Activated CD8-positive, alpha-beta T cell treated with anti-CD3 and anti-CD28 coated beads, Interleukin-2, amount 10 ng/mL, durations not matched to agents 7 days and 5 days (primary cell): ENCODE measurements at regions of chr4 and their contacts with region 1.

Region 1: DNA sequence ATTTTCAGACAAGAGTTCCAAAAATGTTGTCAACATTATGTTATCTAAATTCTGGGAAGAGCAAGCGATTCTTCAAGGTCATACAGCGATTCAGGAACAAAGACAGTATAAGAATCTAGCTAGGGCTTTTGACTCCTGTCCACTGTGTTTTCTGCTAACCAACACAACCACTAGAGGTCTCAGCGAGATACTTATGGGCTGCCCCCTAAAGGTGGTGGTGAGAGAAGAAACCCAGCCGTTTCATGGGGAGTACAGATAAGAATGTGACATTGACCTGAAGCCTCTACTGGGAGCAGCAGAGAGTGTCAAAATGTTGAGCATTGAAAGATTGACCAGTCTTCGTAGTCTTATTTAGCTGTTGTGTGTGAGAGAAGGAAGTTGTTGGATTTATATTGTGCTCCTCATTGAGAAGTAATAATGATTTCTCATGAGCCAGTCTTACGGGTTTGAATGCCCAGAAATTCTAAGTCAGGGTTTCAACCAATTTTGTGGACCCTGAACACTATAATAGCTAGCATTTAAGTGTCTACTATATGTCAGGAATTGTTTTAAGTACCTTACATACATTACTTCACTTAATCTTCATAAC is 168.3 kb downstream of the SPRY1 start:
- DNase-seq: peak; percentile 83
- ATAC-seq: peak; percentile 100
- H3K4me3 Mint-ChIP-seq: no peak overlapping the region
- H3K27ac Mint-ChIP-seq: no peak overlapping the region
- H3K4me1 Mint-ChIP-seq: peaks cover 19% of the 10 kb centered on the region
- H3K27me3 Mint-ChIP-seq: peaks cover 2% of the 10 kb centered on the region

Region 2: DNA sequence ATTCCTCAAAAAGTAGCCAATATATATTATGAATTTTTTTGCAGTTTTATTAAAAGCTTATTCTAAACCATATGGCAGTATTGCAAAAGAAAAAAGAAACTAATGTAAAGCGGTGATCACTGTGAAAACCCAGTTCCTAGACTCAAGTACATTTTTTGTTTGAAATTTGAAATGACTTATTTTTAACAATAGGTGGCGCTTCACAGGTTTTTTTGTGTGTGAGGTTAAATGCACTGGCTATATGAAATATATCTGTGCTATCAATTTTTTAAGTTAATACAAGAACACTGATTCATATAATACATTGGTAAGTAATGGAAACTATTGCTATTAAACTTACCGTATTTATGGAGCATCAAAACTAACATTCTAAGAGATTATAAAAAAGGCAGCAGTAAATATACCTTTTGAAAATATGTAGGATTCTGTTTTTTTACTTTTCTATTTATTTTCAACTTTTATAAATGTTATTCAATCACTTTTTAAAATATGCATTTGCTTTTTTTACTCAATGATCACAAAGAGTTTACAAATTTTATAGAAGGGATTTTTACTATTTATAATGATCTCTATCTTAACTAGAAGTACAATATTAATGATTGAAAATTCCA is 173.9 kb before region 1 on chr4:
- CTCF ChIA-PET with region 1: interaction called, 28 read pairs
- POLR2A ChIA-PET with region 1: no interaction called
- DNase-seq: no peak
- ATAC-seq: no peak
- H3K4me3 Mint-ChIP-seq: no peak overlapping the region
- H3K27ac Mint-ChIP-seq: no peak overlapping the region
- H3K4me1 Mint-ChIP-seq: peaks cover 2% of the 10 kb centered on the region
- H3K27me3 Mint-ChIP-seq: peaks cover 10% of the 10 kb centered on the region

Region 3: DNA sequence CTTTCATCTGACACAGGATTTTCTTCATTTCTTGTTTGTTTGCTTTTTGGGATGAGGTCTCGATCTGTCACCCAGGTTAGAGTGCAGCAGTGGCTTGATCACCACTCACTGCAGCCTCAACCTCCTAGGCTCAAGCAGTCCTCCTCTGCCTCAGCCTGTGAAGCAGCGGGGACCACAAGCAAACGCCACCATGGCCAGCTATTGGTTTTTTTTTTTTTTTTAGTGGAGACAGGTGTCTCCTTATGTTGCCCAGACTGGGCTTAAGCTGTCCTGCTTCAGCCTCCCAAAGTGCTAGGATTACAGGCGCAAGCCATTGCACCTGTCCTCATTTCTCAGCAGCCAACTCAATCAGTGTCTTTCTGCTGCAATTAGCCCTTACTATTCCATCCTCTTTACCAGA is 158.0 kb before region 1 on chr4:
- CTCF ChIA-PET with region 1: interaction called, 12 read pairs
- POLR2A ChIA-PET with region 1: no interaction called
- DNase-seq: no peak
- ATAC-seq: no peak
- H3K4me3 Mint-ChIP-seq: no peak overlapping the region
- H3K27ac Mint-ChIP-seq: no peak overlapping the region
- H3K4me1 Mint-ChIP-seq: peaks cover 54% of the 10 kb centered on the region
- H3K27me3 Mint-ChIP-seq: no peaks in the 10 kb centered on the region

Region 4: GRCh38 chr4:123599920-123600810 is 35.3 kb after region 1 on chr4:
- CTCF ChIA-PET with region 1: interaction called, 27 read pairs
- POLR2A ChIA-PET with region 1: no interaction called
- DNase-seq: peak; percentile 81
- ATAC-seq: peak; percentile 99
- H3K4me3 Mint-ChIP-seq: peak overlapping the region; percentile 24
- H3K27ac Mint-ChIP-seq: peak overlapping the region; percentile 86
- H3K4me1 Mint-ChIP-seq: peaks cover 72% of the 10 kb centered on the region
- H3K27me3 Mint-ChIP-seq: no peaks in the 10 kb centered on the region

Region 5: GRCh38 chr4:123616951-123617461 is 52.2 kb after region 1 on chr4:
- CTCF ChIA-PET with region 1: interaction called, 16 read pairs
- POLR2A ChIA-PET with region 1: no interaction called
- DNase-seq: peak; percentile 79
- ATAC-seq: peak; percentile 96
- H3K4me3 Mint-ChIP-seq: peak overlapping the region; percentile 25
- H3K27ac Mint-ChIP-seq: peak overlapping the region; percentile 65
- H3K4me1 Mint-ChIP-seq: peaks cover 35% of the 10 kb centered on the region
- H3K27me3 Mint-ChIP-seq: no peaks in the 10 kb centered on the region

Region 6: DNA sequence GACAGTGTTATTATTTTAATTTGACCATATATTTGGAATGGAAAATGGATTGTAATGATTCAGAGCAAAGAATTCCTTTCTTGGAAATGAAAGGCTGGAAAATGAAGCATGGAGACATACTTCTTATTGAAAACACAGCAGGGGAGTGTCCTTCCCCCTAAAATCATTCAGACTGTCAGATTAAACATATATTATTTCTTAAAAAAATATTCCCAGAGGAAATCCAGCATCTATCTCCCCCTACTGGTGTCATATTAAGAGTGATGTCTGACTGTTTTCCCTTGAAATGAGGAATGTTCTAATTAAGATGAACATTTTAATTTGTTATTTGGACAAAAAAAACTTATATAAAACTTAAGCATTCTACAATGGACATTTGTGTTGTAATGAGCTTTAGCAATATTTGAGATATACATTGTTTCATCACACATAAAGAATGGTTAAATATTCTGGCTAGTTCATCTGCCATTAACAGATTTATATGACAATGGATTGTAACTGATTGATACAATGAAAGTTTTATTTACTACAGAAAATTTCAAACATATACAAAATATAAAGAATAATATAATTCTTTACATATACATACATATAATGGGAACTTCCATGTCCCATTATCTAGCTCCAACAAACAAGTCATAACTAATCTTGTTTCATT is 96.4 kb after region 1 on chr4:
- CTCF ChIA-PET with region 1: interaction called, 25 read pairs
- POLR2A ChIA-PET with region 1: no interaction called
- DNase-seq: no peak
- ATAC-seq: no peak
- H3K4me3 Mint-ChIP-seq: no peak overlapping the region
- H3K27ac Mint-ChIP-seq: no peak overlapping the region
- H3K4me1 Mint-ChIP-seq: peaks cover 24% of the 10 kb centered on the region
- H3K27me3 Mint-ChIP-seq: peaks cover 13% of the 10 kb centered on the region